ENCODE measurements at regions of chr6 and their contacts with region 1.

Region 1: GRCh38 chr6:148217921-148218320 is 124.7 kb upstream of the SASH1 start:
- DNase-seq: no peak
- ATAC-seq: no peak
- H3K4me3 Mint-ChIP-seq: no peak overlapping the region
- H3K27ac Mint-ChIP-seq: no peak overlapping the region
- H3K4me1 Mint-ChIP-seq: no peaks in the 10 kb centered on the region
- H3K27me3 Mint-ChIP-seq: peaks cover 60% of the 10 kb centered on the region

Region 2: GRCh38 chr6:148157542-148158240 is 60.2 kb before region 1 on chr6:
- CTCF ChIA-PET with region 1: no interaction called
- POLR2A ChIA-PET with region 1: no interaction called
- intact Hi-C with region 1: no loop called
- DNase-seq: no peak
- ATAC-seq: no peak
- H3K4me3 Mint-ChIP-seq: no peak overlapping the region
- H3K27ac Mint-ChIP-seq: no peak overlapping the region
- H3K4me1 Mint-ChIP-seq: no peaks in the 10 kb centered on the region
- H3K27me3 Mint-ChIP-seq: peaks cover 2% of the 10 kb centered on the region

Region 3: DNA sequence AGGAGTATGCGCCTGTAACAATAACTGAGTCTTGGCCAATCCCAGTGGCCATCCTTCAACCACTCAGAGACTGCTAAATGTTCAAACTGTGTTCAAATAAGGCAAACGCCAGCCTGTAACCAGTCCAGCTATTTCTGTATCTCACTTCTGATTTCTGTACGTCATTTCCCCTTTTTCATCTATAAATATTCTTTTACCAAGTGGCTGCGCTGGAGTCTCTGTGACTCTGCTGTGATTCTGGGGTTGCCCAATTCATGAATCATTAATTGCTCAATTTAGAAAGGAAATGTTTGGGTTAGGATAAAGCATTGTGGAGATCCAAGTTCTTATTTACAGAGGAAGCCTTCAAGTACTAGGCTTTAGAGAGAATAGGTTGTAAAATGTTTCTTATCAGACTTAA is 439.1 kb after region 1 on chr6:
- CTCF ChIA-PET with region 1: no interaction called
- POLR2A ChIA-PET with region 1: no interaction called
- intact Hi-C with region 1: loop called in 1 of 2 experiments (anchors 5 kb)
- DNase-seq: no peak
- ATAC-seq: no peak
- H3K4me3 Mint-ChIP-seq: no peak overlapping the region
- H3K27ac Mint-ChIP-seq: no peak overlapping the region
- H3K4me1 Mint-ChIP-seq: no peaks in the 10 kb centered on the region
- H3K27me3 Mint-ChIP-seq: peaks cover 9% of the 10 kb centered on the region